Heart right ventricle (tissue), 16 donors: ENCODE measurements at regions of chr9 and their contacts with region 1.

Region 1: GRCh38 chr9:134698587-134699342 is 57.2 kb downstream of the COL5A1 start:
- DNase-seq: peak; percentile 66 to 78
- ATAC-seq: peak; percentile 66 to 87 (median 80)
- H3K4me3 ChIP-seq: no peak overlapping the region
- H3K27ac ChIP-seq: peak overlapping the region in 1 of 10 donors; percentile 21
- H3K4me1 ChIP-seq: peaks cover 0 to 25% (median 7%) of the 10 kb centered on the region in 9 donors
- H3K27me3 ChIP-seq: no peaks in the 10 kb centered on the region
- CTCF ChIP-seq: peak; percentile 89 to 97 (median 93)

Region 2: GRCh38 chr9:134551650-134552348 is 147.0 kb before region 1 on chr9:
- intact Hi-C with region 1: no loop called
- DNase-seq: no peak
- ATAC-seq: peak in 4 of 8 donors; percentile 25 to 50 (median 40)
- H3K4me3 ChIP-seq: no peak overlapping the region
- H3K27ac ChIP-seq: peak overlapping the region in 1 of 10 donors; percentile 47
- H3K4me1 ChIP-seq: peaks cover 0 to 39% (median 16%) of the 10 kb centered on the region in 9 donors
- H3K27me3 ChIP-seq: peaks cover 0 to 57% (median 19%) of the 10 kb centered on the region in 7 donors
- CTCF ChIP-seq: no peak

Region 3: DNA sequence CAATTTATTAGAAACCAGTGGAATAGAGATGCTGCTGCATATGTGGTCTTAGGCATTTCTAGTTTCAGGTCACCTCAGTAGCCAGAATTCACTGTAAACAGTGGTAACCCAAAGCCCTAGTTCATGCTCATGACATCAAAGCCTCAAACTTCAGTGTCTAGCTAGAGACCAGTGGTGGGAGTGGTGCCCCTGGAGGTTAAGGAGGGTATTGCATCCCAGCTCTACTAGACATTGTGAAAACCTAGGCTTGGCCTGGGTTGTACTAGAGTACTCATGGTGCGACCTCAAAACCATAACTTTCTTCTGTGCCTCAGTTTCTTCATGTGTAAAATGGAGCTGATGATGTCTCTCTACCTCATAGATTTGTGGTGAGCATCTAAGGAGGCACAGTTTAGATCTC is 38.4 kb before region 1 on chr9:
- intact Hi-C with region 1: no loop called
- DNase-seq: no peak
- ATAC-seq: no peak
- H3K4me3 ChIP-seq: no peak overlapping the region
- H3K27ac ChIP-seq: no peak overlapping the region
- H3K4me1 ChIP-seq: peaks cover 17 to 47% (median 30%) of the 10 kb centered on the region in 9 donors
- H3K27me3 ChIP-seq: no peaks in the 10 kb centered on the region
- CTCF ChIP-seq: peak; percentile 8 to 48 (median 27)

Region 4: GRCh38 chr9:134751622-134752021 is 52.9 kb after region 1 on chr9:
- intact Hi-C with region 1: no loop called
- DNase-seq: no peak
- ATAC-seq: no peak
- H3K4me3 ChIP-seq: no peak overlapping the region
- H3K27ac ChIP-seq: no peak overlapping the region
- H3K4me1 ChIP-seq: no peaks in the 10 kb centered on the region
- H3K27me3 ChIP-seq: no peaks in the 10 kb centered on the region
- CTCF ChIP-seq: no peak

Region 5: DNA sequence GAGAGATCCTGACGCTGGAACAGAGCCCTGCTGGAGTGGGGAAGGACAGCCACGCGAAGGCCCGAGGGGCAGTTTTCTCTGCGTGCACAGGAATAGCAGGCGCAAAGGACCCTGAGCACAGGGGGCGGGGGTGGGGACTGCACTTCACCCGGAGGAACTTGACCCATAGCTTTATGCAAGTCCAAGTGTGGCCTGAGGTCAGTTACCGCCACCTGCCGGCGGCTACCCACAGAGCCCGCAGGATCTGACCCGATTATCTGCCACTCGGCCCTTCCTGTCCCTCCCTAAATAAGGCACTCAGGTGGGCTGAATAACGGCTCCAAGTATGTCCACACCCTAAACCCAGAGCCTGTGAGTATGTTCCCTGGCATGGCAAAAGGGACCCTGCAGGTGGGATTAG is 284.3 kb after region 1 on chr9:
- intact Hi-C with region 1: loop called in 9 of 10 experiments (anchors 2 to 10 kb)
- DNase-seq: peak in 1 of 2 donors; percentile 58
- ATAC-seq: peak in 5 of 8 donors; percentile 44 to 67 (median 53)
- H3K4me3 ChIP-seq: no peak overlapping the region
- H3K27ac ChIP-seq: no peak overlapping the region
- H3K4me1 ChIP-seq: peaks cover 0 to 4% (median 0%) of the 10 kb centered on the region in 9 donors
- H3K27me3 ChIP-seq: peaks cover 0 to 11% (median 5%) of the 10 kb centered on the region in 7 donors
- CTCF ChIP-seq: peak; percentile 31 to 70 (median 55)

Region 6: DNA sequence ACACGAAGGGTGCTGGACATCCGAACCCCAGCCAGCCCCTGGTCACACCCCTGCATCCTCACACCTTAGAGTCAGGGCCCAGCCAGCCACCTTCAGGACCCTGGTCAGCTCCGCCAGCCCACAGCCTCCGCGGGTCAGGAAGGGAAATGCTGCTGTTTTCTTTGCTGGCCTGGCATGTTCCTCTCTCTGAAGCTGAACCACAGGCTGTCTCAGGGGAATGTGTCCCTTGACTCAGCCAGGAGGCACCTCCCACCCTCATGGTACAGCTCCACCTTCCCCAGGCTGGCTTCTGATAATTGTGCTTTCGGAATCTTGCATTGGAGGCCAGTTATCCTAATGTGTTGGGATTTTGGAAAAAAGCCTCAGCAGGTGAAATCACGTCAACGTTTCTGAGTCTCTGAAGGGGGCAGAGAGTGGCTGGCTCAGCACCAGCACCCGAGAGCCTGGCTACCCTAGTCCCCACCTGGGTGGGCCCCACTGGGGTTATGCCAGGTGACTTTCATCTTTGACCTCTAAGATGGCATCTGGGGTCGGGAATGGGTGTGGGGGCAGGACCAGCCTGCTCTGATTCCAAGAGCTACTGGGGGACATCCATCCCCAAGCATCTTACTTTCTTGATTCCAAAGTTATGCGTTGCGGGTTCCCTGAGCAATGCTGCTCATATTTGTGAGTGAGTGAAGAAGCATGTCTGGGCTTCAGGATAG is 378.9 kb after region 1 on chr9:
- intact Hi-C with region 1: loop called in 1 of 10 experiments (anchors 10 kb)
- DNase-seq: no peak
- ATAC-seq: peak in 1 of 8 donors; percentile 43
- H3K4me3 ChIP-seq: no peak overlapping the region
- H3K27ac ChIP-seq: no peak overlapping the region
- H3K4me1 ChIP-seq: peaks cover 0 to 19% (median 12%) of the 10 kb centered on the region in 9 donors
- H3K27me3 ChIP-seq: peaks cover 0 to 35% (median 3%) of the 10 kb centered on the region in 7 donors
- CTCF ChIP-seq: no peak

Region 7: DNA sequence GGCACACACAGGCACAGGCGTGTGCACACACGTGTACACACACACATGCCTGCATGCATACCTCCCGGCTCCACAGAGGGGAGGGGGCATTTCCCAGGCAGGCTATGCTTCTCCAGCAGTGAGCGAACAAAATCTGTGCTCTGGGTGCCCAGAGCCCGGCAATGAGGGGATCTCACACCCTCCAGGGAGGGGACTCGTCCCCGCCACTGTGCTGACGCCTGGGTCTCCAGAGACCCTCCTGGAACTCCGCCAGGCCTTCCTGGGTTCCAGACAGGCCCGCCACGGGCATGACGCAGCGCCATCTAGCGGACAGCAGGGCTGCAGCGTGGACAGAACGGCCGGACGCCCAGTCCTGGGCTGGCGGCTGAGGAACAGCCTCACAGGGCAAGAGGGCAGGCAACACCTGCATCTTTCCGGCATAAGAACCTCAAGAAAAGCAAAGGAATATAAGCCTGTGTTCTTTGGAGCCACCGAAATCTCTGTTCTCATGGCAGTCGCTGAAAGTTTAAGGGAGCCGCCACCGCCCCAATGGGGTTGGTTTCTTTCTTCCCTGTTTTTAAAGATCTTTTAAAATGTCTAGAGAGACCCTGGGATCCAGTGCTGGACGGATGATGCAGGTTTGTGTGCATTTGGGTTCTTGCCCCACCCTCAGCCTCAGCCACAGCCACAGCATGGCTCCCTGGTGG is 645.2 kb after region 1 on chr9:
- intact Hi-C with region 1: loop called in 1 of 10 experiments (anchors 10 kb)
- DNase-seq: peak; percentile 63 to 80
- ATAC-seq: peak; percentile 56 to 88 (median 72)
- H3K4me3 ChIP-seq: no peak overlapping the region
- H3K27ac ChIP-seq: no peak overlapping the region
- H3K4me1 ChIP-seq: peaks cover 0 to 10% (median 0%) of the 10 kb centered on the region in 9 donors
- H3K27me3 ChIP-seq: peaks cover 11 to 97% (median 59%) of the 10 kb centered on the region in 7 donors
- CTCF ChIP-seq: peak; percentile 75 to 97 (median 94)

Region 8: GRCh38 chr9:135410831-135411473 is 712.2 kb after region 1 on chr9:
- intact Hi-C with region 1: loop called in 6 of 10 experiments (anchors 5 to 10 kb)
- DNase-seq: no peak
- ATAC-seq: no peak
- H3K4me3 ChIP-seq: no peak overlapping the region
- H3K27ac ChIP-seq: no peak overlapping the region
- H3K4me1 ChIP-seq: peaks cover 0 to 5% (median 0%) of the 10 kb centered on the region in 9 donors
- H3K27me3 ChIP-seq: peaks cover 3 to 57% (median 44%) of the 10 kb centered on the region in 7 donors
- CTCF ChIP-seq: no peak